ENCODE measurements at regions of chr14 and their contacts with region 1.

Region 1: GRCh38 chr14:23631702-23632460 is 4.3 kb upstream of the DHRS2 start:
- DNase-seq: peak; percentile 72 to 93
- H3K4me3 ChIP-seq: no peak overlapping the region
- H3K27ac ChIP-seq: no peak overlapping the region
- H3K4me1 ChIP-seq: no peaks in the 10 kb centered on the region; a peak in 1 of 7 replicates
- H3K27me3 ChIP-seq: no peaks in the 10 kb centered on the region
- CTCF ChIP-seq: peak; percentile 92 to 99 (median 93)
- EP300 ChIP-seq: no peak
- POLR2A ChIP-seq: no peak
- RAD21 ChIP-seq: peak; percentile 92 to 93

Region 2: DNA sequence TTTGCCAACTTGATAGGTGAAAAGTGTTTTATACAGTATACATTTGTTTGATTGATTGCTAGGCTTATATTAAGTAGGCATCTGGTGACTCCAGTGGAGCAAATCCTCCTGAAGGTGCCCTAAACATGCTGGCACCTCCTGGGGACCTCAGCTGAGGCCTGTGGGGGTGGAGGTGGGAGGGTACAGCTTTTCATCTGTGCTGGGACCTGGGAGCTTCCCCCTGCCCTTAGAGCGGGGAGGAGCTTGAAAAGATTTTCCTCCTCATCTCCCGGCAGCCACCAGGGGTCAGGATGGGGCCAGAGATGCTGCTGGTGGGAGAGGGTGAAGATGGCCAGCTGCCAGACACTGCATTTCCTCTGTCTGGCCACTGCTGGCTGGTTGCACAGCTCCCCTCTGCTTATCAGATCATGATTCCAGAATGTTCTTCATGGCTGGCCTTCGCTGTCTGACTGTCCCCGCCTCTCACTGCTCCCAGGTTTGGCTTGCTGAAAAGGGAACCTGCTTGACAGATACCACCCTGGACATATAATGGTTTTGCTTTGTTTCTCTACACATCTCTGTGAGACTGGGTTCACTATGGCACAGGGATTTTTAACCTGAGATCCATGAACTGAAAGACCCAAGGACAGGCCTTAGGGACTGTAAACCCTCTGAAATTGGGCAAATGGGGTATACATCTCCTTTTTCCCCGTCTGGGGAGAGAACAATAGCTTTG is 42.8 kb before region 1 on chr14:
- CTCF ChIA-PET with region 1: interaction called, 49 read pairs
- POLR2A ChIA-PET with region 1: no interaction called
- DNase-seq: peak in 1 of 2 experiments; percentile 87
- H3K4me3 ChIP-seq: no peak overlapping the region
- H3K27ac ChIP-seq: no peak overlapping the region
- H3K4me1 ChIP-seq: peaks cover 0 to 6% (median under 1%) of the 10 kb centered on the region in 4 experiments; a peak in 2 of 7 replicates
- H3K27me3 ChIP-seq: no peaks in the 10 kb centered on the region
- CTCF ChIP-seq: peak; percentile 88 to 95 (median 95)
- EP300 ChIP-seq: no peak
- POLR2A ChIP-seq: no peak
- RAD21 ChIP-seq: peak; percentile 90 to 92

Region 3: GRCh38 chr14:23646648-23647549 is 15.0 kb after region 1 on chr14:
- CTCF ChIA-PET with region 1: interaction called, 47 read pairs
- POLR2A ChIA-PET with region 1: interaction called, 3 read pairs
- DNase-seq: no peak
- H3K4me3 ChIP-seq: no peak overlapping the region
- H3K27ac ChIP-seq: no peak overlapping the region
- H3K4me1 ChIP-seq: no peaks in the 10 kb centered on the region
- H3K27me3 ChIP-seq: peaks cover 0 to 3% (median 0%) of the 10 kb centered on the region in 4 experiments; a peak in 2 of 7 replicates
- CTCF ChIP-seq: no peak
- EP300 ChIP-seq: no peak
- POLR2A ChIP-seq: no peak
- RAD21 ChIP-seq: no peak

Region 4: DNA sequence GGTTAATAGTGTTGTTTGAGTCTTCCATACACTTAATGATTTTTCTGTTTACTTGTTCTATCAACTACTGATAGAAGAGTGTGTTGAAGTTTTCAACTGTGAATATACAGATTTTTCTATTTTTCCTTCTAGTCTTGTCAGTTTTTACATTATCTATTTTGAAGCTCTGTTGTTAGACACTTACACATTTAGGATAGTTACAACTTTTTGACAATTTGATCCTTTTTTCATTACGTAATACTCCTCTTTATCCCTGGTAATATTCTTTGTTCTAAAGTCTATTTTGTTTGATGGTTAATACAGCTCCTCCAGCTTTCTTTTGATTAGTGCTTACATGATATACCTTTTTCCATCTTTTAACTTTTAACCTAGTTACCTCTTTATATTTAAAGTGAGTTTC is 49.5 kb after region 1 on chr14:
- CTCF ChIA-PET with region 1: interaction called, 25 read pairs
- POLR2A ChIA-PET with region 1: no interaction called
- DNase-seq: no peak
- H3K4me3 ChIP-seq: no peak overlapping the region
- H3K27ac ChIP-seq: no peak overlapping the region
- H3K4me1 ChIP-seq: no peaks in the 10 kb centered on the region
- H3K27me3 ChIP-seq: no peaks in the 10 kb centered on the region
- CTCF ChIP-seq: no peak
- EP300 ChIP-seq: no peak
- POLR2A ChIP-seq: no peak
- RAD21 ChIP-seq: no peak

Region 5: GRCh38 chr14:23910101-23910875 is 278.4 kb after region 1 on chr14:
- CTCF ChIA-PET with region 1: interaction called, 77 read pairs
- POLR2A ChIA-PET with region 1: no interaction called
- DNase-seq: peak; percentile 81 to 92
- H3K4me3 ChIP-seq: no peak overlapping the region
- H3K27ac ChIP-seq: no peak overlapping the region
- H3K4me1 ChIP-seq: peaks cover 0 to 9% (median 4%) of the 10 kb centered on the region in 4 experiments; a peak in 3 of 7 replicates
- H3K27me3 ChIP-seq: no peaks in the 10 kb centered on the region
- CTCF ChIP-seq: peak; percentile 67 to 93 (median 84)
- EP300 ChIP-seq: no peak
- POLR2A ChIP-seq: no peak
- RAD21 ChIP-seq: peak; percentile 93

Region 6: GRCh38 chr14:23937203-23937602 is 305.3 kb after region 1 on chr14:
- CTCF ChIA-PET with region 1: interaction called, 44 read pairs
- POLR2A ChIA-PET with region 1: no interaction called
- DNase-seq: no peak
- H3K4me3 ChIP-seq: no peak overlapping the region
- H3K27ac ChIP-seq: no peak overlapping the region
- H3K4me1 ChIP-seq: no peaks in the 10 kb centered on the region
- H3K27me3 ChIP-seq: no peaks in the 10 kb centered on the region
- CTCF ChIP-seq: no peak
- EP300 ChIP-seq: no peak
- POLR2A ChIP-seq: no peak
- RAD21 ChIP-seq: no peak